ENCODE measurements at regions of chr3 and their contacts with region 1.

Region 1: GRCh38 chr3:151838583-151839312 is 24.8 kb downstream of the AADAC start:
- DNase-seq: peak in 9 of 14 experiments; percentile 2 to 68 (median 10)
- ATAC-seq: no peak
- H3K4me3 ChIP-seq: no peak overlapping the region
- H3K4me3 Mint-ChIP-seq: no peak overlapping the region
- H3K27ac ChIP-seq: no peak overlapping the region
- H3K27ac Mint-ChIP-seq: no peak overlapping the region
- H3K4me1 ChIP-seq: no peaks in the 10 kb centered on the region
- H3K4me1 Mint-ChIP-seq: no peaks in the 10 kb centered on the region
- H3K27me3 ChIP-seq: peaks cover 0 to 3% of the 10 kb centered on the region in 2 experiments
- H3K27me3 Mint-ChIP-seq: peaks cover 14% of the 10 kb centered on the region
- CTCF ChIP-seq: peak; percentile 61

Region 2: GRCh38 chr3:150567328-150567727 is 1271.4 kb before region 1 on chr3:
- CTCF ChIA-PET with region 1: no interaction called
- POLR2A ChIA-PET with region 1: no interaction called
- intact Hi-C with region 1: no loop called
- DNase-seq: no peak
- ATAC-seq: no peak
- H3K4me3 ChIP-seq: no peak overlapping the region
- H3K4me3 Mint-ChIP-seq: no peak overlapping the region
- H3K27ac ChIP-seq: no peak overlapping the region
- H3K27ac Mint-ChIP-seq: no peak overlapping the region
- H3K4me1 ChIP-seq: no peaks in the 10 kb centered on the region
- H3K4me1 Mint-ChIP-seq: no peaks in the 10 kb centered on the region
- H3K27me3 ChIP-seq: no peaks in the 10 kb centered on the region
- H3K27me3 Mint-ChIP-seq: no peaks in the 10 kb centered on the region
- CTCF ChIP-seq: no peak

Region 3: DNA sequence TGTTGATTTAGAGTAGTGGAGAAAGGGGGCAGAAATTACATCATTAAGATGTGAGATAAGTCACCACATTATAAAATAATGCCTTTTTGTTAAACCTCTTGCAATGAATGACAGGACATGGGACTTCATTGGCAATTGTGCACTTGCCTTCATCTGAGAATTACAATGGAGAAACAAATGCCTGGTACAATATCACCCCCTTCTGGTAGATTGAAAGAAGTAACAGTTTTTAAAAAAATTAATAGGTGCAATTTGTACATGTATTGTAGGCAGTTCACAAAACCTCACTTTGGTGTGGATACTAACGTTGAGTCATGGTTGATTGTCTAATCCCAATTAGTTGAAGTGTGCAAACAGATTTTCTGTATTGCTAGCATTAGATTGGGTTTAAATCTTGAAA is 555.8 kb before region 1 on chr3:
- CTCF ChIA-PET with region 1: no interaction called
- POLR2A ChIA-PET with region 1: no interaction called
- intact Hi-C with region 1: no loop called
- DNase-seq: peak in 3 of 14 experiments; percentile 72 to 79 (median 78)
- ATAC-seq: peak; percentile 68
- H3K4me3 ChIP-seq: no peak overlapping the region
- H3K4me3 Mint-ChIP-seq: no peak overlapping the region
- H3K27ac ChIP-seq: no peak overlapping the region
- H3K27ac Mint-ChIP-seq: no peak overlapping the region
- H3K4me1 ChIP-seq: peaks cover 11% of the 10 kb centered on the region
- H3K4me1 Mint-ChIP-seq: peaks cover 27% of the 10 kb centered on the region
- H3K27me3 ChIP-seq: no peaks in the 10 kb centered on the region
- H3K27me3 Mint-ChIP-seq: no peaks in the 10 kb centered on the region
- CTCF ChIP-seq: peak; percentile 83

Region 4: DNA sequence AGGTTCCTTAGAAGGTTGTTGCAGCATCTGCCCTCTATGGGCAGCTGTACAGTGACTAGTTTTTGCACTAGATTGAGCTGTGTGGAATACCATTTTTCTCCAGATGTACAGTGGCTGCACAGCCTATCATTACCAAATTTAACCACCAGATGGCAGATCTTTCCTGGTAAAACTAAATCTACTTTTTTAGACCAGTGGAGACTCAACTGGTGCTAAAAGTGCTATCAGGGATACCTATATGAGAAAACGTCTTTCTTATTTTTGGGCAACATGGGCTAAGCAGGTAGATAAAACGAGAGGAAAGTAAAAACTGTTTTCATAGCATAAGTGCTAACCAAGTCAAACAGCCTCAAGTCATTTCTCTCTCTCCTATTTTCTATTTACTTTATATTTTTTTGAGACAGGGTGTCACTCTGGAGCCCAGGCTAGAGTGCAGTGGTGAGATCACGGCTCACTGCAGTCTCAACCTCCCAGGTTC is 399.1 kb before region 1 on chr3:
- CTCF ChIA-PET with region 1: no interaction called
- POLR2A ChIA-PET with region 1: no interaction called
- intact Hi-C with region 1: loop called (anchors 1 to 5 kb)
- DNase-seq: peak in 4 of 14 experiments; percentile 4 to 58 (median 44)
- ATAC-seq: peak; percentile 46
- H3K4me3 ChIP-seq: no peak overlapping the region
- H3K4me3 Mint-ChIP-seq: no peak overlapping the region
- H3K27ac ChIP-seq: no peak overlapping the region
- H3K27ac Mint-ChIP-seq: no peak overlapping the region
- H3K4me1 ChIP-seq: no peaks in the 10 kb centered on the region
- H3K4me1 Mint-ChIP-seq: no peaks in the 10 kb centered on the region
- H3K27me3 ChIP-seq: no peaks in the 10 kb centered on the region
- H3K27me3 Mint-ChIP-seq: peaks cover 4% of the 10 kb centered on the region
- CTCF ChIP-seq: peak; percentile 73

Region 5: DNA sequence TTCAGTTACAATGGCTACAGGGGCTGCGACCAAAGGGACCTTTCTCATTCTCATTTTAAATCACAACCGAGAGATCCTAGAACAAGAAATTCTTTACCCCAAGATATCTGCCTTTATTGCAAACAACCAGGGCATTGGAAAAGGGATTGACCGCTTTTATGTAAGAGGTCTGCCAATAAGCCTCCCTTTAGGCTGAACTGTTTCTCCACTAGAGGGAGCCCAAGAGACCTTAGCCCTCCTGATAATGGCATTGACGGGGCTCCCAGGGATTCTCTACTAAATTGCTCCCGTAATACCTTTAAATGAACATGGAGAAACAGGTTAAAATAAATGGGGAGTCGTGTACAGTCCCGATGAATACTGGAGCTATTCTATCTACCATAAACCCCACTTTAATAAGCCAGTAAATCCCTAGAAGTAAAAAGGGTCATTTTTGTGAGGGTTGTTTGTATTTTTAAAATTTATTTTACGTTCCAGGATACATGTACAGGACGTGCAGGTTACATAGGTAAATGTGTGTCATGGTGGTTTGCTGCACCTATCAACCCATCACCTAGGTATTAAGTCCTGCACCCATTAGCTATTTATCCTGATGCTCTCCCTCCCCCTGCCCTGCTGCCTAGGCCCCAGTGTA is 370.3 kb before region 1 on chr3:
- CTCF ChIA-PET with region 1: no interaction called
- POLR2A ChIA-PET with region 1: no interaction called
- intact Hi-C with region 1: loop called in 1 of 2 experiments (anchors 10 kb)
- DNase-seq: peak in 10 of 14 experiments; percentile 7 to 71 (median 14)
- ATAC-seq: no peak
- H3K4me3 ChIP-seq: no peak overlapping the region
- H3K4me3 Mint-ChIP-seq: no peak overlapping the region
- H3K27ac ChIP-seq: no peak overlapping the region
- H3K27ac Mint-ChIP-seq: no peak overlapping the region
- H3K4me1 ChIP-seq: no peaks in the 10 kb centered on the region
- H3K4me1 Mint-ChIP-seq: no peaks in the 10 kb centered on the region
- H3K27me3 ChIP-seq: no peaks in the 10 kb centered on the region
- H3K27me3 Mint-ChIP-seq: peaks cover 9% of the 10 kb centered on the region
- CTCF ChIP-seq: peak; percentile 81

Region 6: DNA sequence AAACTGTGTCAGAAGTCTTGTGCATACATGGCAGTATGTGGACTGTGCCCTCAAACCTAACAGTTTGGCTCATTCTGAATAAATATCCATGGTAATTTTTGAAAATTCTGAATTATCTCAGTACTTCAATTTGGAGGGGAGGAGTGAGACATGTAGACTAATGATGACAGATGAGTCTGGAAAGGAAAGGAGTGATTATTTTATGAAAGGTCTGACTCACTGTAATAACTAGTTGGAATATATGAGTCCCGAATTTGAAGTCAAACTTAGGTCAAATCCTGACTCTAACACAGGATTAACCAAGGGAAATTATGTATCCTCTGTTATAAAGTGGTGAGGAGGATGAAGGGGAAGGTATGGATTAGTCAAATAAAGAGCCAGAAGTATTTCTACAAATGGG is 73.3 kb after region 1 on chr3:
- CTCF ChIA-PET with region 1: no interaction called
- POLR2A ChIA-PET with region 1: no interaction called
- intact Hi-C with region 1: no loop called
- DNase-seq: no peak
- ATAC-seq: no peak
- H3K4me3 ChIP-seq: no peak overlapping the region
- H3K4me3 Mint-ChIP-seq: no peak overlapping the region
- H3K27ac ChIP-seq: no peak overlapping the region
- H3K27ac Mint-ChIP-seq: no peak overlapping the region
- H3K4me1 ChIP-seq: no peaks in the 10 kb centered on the region
- H3K4me1 Mint-ChIP-seq: no peaks in the 10 kb centered on the region
- H3K27me3 ChIP-seq: no peaks in the 10 kb centered on the region
- H3K27me3 Mint-ChIP-seq: no peaks in the 10 kb centered on the region
- CTCF ChIP-seq: no peak

Measured in CD4-positive, alpha-beta T cell (primary cell).